Activated CD8-positive, alpha-beta T cell treated with anti-CD3 and anti-CD28 coated beads for 36 hours (primary cell): ENCODE measurements at regions of chr12 and their contacts with region 1.

Region 1: DNA sequence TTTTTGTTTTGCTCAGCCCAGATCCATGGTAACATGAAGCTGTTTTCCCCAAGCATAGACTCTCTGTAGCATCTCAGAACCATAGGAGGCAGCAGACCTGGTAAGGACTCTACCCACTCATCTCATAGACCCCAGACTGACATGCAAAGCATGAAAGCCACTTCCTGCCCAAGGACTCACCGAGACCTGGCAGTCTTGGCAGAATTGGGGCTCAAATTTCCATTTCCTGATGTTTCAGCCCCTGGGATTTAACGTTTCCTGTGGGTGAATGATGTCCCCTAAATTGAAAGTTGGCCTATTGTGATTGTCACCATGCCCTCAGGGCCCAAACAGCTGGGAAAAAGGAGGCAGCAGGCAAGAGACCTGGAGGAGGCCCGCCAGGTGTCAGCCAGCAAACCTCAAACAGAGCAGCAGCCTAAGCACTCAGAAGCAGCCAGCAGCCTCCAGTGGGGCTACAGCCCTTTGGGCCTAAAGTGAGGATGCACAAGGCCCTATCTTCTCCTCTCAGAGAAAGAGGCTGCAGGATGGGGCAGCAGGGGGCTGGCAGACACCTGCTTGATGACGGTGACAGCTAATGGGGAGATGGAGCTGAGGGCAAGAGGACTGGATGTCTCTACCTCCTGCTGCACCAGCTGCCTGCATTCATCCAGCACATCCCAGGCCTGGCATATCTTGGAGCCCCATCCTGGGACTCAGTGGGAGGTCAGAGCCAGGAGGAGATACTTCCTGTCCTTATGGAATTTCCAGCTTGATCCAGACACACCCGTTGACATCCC is 8.5 kb downstream of the KRT85 start:
- DNase-seq: peak; percentile 64
- ATAC-seq: peak; percentile 97
- H3K4me3 Mint-ChIP-seq: no peak overlapping the region
- H3K27ac Mint-ChIP-seq: no peak overlapping the region
- H3K4me1 Mint-ChIP-seq: peaks cover 24% of the 10 kb centered on the region
- H3K27me3 Mint-ChIP-seq: no peaks in the 10 kb centered on the region
- CTCF ChIP-seq: no peak

Region 2: DNA sequence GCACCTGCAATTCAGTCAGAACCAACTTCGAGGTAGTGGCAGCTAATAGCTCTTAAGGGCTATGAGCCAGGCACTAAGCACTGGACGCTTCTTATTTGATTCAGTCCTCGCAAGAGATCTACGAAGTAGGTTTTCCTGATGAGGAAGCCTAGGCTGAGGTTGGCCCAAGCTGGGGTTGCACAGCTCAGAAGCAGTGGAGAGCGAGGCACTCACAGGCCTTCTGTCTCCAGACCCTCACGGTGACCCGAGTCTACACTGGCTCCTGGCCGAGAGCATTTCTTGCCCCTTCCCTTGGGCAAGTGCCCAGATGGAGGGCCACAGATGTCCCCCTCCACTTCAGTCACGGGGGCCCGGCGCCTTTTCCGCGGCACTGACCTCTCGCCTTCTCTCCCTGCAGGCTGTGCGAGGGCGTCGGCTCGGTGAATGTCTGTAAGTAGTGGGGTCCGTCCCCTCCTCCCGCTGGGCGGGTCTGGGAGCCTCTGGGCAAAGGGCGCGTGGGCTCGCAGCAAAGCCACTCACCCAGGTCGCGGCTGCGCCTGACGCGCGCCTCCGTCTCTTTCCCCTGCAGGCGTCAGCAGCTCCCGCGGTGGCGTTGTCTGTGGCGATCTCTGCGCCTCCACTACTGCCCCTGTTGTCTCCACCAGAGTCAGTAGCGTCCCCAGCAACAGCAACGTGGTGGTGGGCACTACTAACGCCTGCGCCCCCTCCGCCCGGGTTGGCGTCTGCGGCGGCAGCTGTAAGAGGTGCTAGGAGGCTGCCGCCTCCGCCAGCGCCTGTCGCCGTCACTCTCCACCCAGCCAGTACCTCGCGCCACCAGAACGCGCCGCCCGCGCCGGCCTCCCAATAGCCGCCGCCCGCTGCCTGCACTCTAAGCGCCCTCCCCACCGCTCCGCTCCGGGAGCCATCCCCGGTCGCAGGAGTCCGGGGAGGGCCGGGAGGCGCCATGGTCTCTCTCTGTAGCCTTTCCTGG is 50.6 kb before region 1 on chr12:
- CTCF ChIA-PET with region 1: no interaction called
- POLR2A ChIA-PET with region 1: no interaction called
- intact Hi-C with region 1: no loop called
- DNase-seq: peak; percentile 67
- ATAC-seq: peak; percentile 88
- H3K4me3 Mint-ChIP-seq: peak overlapping the region; percentile 22
- H3K27ac Mint-ChIP-seq: no peak overlapping the region
- H3K4me1 Mint-ChIP-seq: peaks cover 15% of the 10 kb centered on the region
- H3K27me3 Mint-ChIP-seq: peaks cover 54% of the 10 kb centered on the region
- CTCF ChIP-seq: peak; percentile 25

Region 3: GRCh38 chr12:52338241-52338960 is 20.4 kb before region 1 on chr12:
- CTCF ChIA-PET with region 1: interaction called, 11 read pairs
- POLR2A ChIA-PET with region 1: no interaction called
- intact Hi-C with region 1: no loop called
- DNase-seq: no peak
- ATAC-seq: no peak
- H3K4me3 Mint-ChIP-seq: no peak overlapping the region
- H3K27ac Mint-ChIP-seq: no peak overlapping the region
- H3K4me1 Mint-ChIP-seq: peaks cover 8% of the 10 kb centered on the region
- H3K27me3 Mint-ChIP-seq: peaks cover 4% of the 10 kb centered on the region
- CTCF ChIP-seq: no peak

Region 4: DNA sequence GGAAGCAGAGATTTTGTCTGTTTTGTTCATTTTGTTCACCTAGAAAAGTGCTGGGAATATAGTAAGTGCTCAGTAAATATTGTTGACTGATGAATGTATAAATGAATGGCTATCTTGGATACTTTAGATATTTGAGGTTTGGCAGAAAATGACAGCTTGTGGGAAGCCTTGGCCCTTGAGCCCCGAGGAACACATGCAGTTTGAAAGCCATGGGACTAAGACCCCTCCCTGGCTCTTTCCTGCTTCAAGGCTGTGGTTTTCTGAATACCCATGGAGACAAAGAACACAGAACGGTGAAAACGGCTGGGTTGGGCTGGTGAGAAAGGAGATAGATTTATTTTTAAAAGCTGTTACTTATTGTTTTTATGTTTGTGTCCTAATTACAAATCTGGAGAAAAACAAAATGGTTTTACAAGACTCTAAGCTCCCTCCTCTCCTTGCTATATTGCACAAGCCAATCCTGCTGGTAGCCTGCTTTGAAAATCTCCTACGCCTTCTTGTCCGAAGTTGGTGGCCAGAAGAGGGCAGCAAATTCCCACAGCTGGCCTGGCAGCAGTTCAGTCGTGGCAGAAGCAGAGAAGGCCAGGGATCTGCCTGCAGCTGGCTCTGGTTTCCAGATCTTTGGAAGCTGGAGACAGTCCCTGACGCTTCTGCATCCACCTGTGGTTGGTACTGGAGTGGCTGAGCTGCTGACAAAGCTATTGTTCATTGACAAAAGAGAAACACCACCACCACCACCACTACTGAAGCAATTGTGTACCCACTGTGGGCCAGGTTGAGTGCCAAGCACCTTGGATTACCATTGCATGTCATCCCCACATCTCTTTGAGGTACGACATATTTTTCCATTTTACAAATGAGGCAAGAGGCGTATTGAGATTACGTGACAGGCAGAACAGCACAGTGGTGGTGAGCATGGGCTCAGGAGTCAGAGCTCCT is 13.7 kb after region 1 on chr12:
- CTCF ChIA-PET with region 1: interaction called, 28 read pairs
- POLR2A ChIA-PET with region 1: interaction called, 3 read pairs
- intact Hi-C with region 1: no loop called
- DNase-seq: peak; percentile 73
- ATAC-seq: peak; percentile 56
- H3K4me3 Mint-ChIP-seq: no peak overlapping the region
- H3K27ac Mint-ChIP-seq: no peak overlapping the region
- H3K4me1 Mint-ChIP-seq: no peaks in the 10 kb centered on the region
- H3K27me3 Mint-ChIP-seq: peaks cover 3% of the 10 kb centered on the region
- CTCF ChIP-seq: peak; percentile 50